Activated CD4-positive, alpha-beta memory T cell treated with anti-CD3 and anti-CD28 coated beads for 36 hours (primary cell): ENCODE measurements at regions of chr3 and their contacts with region 1.

Region 1: GRCh38 chr3:59424268-59425010 is 374.6 kb upstream of the CFAP20DC start:
- DNase-seq: peak; percentile 28
- H3K4me3 Mint-ChIP-seq: no peak overlapping the region
- H3K27ac Mint-ChIP-seq: no peak overlapping the region
- H3K4me1 Mint-ChIP-seq: peaks cover 69% of the 10 kb centered on the region
- H3K27me3 Mint-ChIP-seq: peaks cover 14% of the 10 kb centered on the region

Region 2: DNA sequence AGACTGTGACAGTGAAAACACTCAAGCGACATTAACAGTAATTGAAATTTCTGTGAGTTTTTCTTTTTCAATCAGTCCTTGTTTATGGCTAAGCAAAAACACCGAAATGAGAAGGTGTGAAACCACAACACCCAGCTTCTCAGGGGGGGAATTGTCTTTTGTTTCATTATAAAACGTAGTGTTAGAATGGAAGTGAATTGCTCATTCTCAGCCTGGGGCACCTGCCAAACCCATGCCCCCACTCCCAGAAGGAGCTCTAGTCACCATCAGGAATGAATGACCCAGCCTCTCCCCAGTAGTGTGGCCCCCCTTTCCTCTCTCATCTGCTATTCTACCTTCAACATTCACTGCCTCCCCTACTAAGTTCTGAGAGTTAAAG is 188.8 kb before region 1 on chr3:
- CTCF ChIA-PET with region 1: no interaction called
- POLR2A ChIA-PET with region 1: no interaction called
- intact Hi-C with region 1: loop called (anchors 2 kb)
- DNase-seq: peak; percentile 71
- H3K4me3 Mint-ChIP-seq: no peak overlapping the region
- H3K27ac Mint-ChIP-seq: no peak overlapping the region
- H3K4me1 Mint-ChIP-seq: peaks cover 19% of the 10 kb centered on the region
- H3K27me3 Mint-ChIP-seq: peaks cover 15% of the 10 kb centered on the region

Region 3: GRCh38 chr3:59313365-59313764 is 111.1 kb before region 1 on chr3:
- CTCF ChIA-PET with region 1: interaction called, 4 read pairs
- POLR2A ChIA-PET with region 1: no interaction called
- intact Hi-C with region 1: loop called (anchors 2 kb)
- DNase-seq: peak; percentile 68
- H3K4me3 Mint-ChIP-seq: no peak overlapping the region
- H3K27ac Mint-ChIP-seq: no peak overlapping the region
- H3K4me1 Mint-ChIP-seq: peaks cover 23% of the 10 kb centered on the region
- H3K27me3 Mint-ChIP-seq: no peaks in the 10 kb centered on the region

Region 4: GRCh38 chr3:59326246-59327024 is 98.0 kb before region 1 on chr3:
- CTCF ChIA-PET with region 1: no interaction called
- POLR2A ChIA-PET with region 1: no interaction called
- intact Hi-C with region 1: no loop called
- DNase-seq: no peak
- H3K4me3 Mint-ChIP-seq: no peak overlapping the region
- H3K27ac Mint-ChIP-seq: no peak overlapping the region
- H3K4me1 Mint-ChIP-seq: no peaks in the 10 kb centered on the region
- H3K27me3 Mint-ChIP-seq: no peaks in the 10 kb centered on the region

Region 5: DNA sequence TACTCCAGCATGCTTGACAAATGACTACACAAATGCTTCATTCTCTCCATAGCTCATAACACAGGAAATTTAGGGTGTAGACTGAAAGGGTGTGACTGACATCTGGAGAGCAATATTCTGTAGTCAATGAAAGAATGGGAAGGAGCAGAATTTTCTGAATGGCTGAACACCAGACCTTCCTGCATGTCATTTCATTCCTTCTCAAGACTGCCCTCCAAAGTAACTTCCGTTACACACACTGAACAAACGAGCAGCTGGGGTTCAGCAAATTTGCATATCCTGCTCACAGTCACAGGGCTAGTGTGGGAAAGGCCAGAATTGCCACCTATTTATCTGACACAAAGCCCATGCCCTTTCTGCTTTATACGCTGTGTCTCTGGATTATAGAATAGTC is 49.6 kb before region 1 on chr3:
- CTCF ChIA-PET with region 1: no interaction called
- POLR2A ChIA-PET with region 1: no interaction called
- intact Hi-C with region 1: no loop called
- DNase-seq: peak; percentile 28
- H3K4me3 Mint-ChIP-seq: no peak overlapping the region
- H3K27ac Mint-ChIP-seq: no peak overlapping the region
- H3K4me1 Mint-ChIP-seq: peaks cover 5% of the 10 kb centered on the region
- H3K27me3 Mint-ChIP-seq: peaks cover 2% of the 10 kb centered on the region

Region 6: DNA sequence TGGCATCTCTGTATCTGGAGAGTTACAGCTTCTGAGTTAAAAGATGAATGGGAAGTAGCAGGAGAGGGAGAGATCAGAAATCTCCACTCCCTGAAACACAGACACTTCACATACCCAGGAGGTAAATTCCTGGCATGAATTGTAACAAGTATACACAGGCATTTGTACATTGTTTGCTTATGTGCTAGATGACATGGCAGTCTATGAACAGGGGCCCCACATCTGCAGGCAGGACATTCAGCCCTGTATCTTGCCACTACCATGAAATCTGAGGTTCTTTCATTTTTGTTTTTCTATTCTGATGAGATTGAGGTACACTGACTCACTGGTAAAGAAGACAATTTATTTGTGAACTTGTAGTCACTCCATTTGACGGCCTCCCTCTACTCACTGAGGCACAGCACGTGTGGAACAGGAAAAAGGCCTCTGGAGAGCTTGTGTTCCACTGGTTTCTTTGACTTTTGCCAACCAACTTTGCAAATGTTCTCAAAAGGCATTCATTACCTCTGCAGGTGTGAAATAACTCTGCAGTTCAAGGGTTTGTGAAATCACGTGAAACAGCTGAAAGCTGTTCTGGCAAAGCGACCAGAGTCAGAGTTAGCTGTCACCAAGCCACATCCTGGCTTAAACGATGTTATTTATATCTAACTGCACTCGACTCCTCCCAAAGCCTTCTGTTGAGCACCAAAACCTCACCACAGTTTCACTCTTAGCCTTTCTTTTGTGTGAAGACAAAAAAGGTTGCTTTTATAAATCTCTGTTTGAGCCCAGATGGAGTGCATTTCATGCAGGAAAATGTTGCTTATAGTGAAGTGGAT is 26.7 kb after region 1 on chr3:
- CTCF ChIA-PET with region 1: interaction called, 10 read pairs
- POLR2A ChIA-PET with region 1: interaction called, 6 read pairs
- intact Hi-C with region 1: loop called (anchors 1 kb)
- DNase-seq: peak; percentile 73
- H3K4me3 Mint-ChIP-seq: peak overlapping the region; percentile 53
- H3K27ac Mint-ChIP-seq: peak overlapping the region; percentile 94
- H3K4me1 Mint-ChIP-seq: peaks cover 64% of the 10 kb centered on the region
- H3K27me3 Mint-ChIP-seq: no peaks in the 10 kb centered on the region

Region 7: DNA sequence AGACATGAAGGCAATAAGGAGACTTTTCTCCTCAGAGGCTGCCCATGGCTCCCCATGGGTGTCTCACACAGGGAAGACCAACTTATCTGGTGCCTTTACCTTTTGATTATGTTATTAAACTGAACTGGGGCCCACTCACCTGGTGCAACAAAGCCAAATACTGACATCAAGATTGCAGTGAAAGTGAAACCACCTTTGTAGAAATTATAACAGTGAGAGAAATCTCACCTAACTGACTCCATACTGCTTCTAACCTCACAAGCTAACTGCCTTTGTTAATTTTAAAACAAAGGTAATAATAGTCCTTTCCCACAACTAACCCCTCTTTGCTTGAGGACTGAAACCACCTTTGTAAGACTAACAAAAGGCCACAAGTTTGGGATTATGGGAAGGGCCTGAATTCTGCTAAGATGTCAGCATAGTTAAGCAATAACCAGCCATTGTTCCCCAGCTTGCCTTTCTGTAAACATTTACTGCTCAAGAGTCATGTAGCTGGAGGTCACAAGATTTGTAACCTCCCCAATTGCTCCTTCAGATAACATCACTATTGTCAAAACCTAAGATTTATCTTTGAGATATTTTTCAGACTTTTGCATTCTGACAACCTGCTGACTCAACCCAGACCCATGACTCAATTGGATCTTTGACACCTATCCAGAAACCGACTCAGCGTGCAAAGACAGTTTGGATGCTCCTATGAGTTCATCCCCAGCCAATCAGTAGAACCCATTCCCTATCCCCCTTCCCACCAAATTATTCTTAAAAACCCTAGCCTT is 45.7 kb after region 1 on chr3:
- CTCF ChIA-PET with region 1: no interaction called
- POLR2A ChIA-PET with region 1: no interaction called
- intact Hi-C with region 1: loop called (anchors 1 kb)
- DNase-seq: peak; percentile 70
- H3K4me3 Mint-ChIP-seq: no peak overlapping the region
- H3K27ac Mint-ChIP-seq: peak overlapping the region; percentile 71
- H3K4me1 Mint-ChIP-seq: peaks cover 22% of the 10 kb centered on the region
- H3K27me3 Mint-ChIP-seq: no peaks in the 10 kb centered on the region

Region 8: GRCh38 chr3:59526999-59527398 is 102.6 kb after region 1 on chr3:
- CTCF ChIA-PET with region 1: no interaction called
- POLR2A ChIA-PET with region 1: interaction called, 4 read pairs
- intact Hi-C with region 1: loop called (anchors 1 kb)
- DNase-seq: no peak
- H3K4me3 Mint-ChIP-seq: no peak overlapping the region
- H3K27ac Mint-ChIP-seq: peak overlapping the region; percentile 0
- H3K4me1 Mint-ChIP-seq: peaks cover 15% of the 10 kb centered on the region
- H3K27me3 Mint-ChIP-seq: peaks cover 2% of the 10 kb centered on the region

Region 9: GRCh38 chr3:59566481-59566975 is 142.1 kb after region 1 on chr3:
- CTCF ChIA-PET with region 1: interaction called, 3 read pairs
- POLR2A ChIA-PET with region 1: interaction called, 3 read pairs
- intact Hi-C with region 1: loop called (anchors 1 kb)
- DNase-seq: peak; percentile 66
- H3K4me3 Mint-ChIP-seq: no peak overlapping the region
- H3K27ac Mint-ChIP-seq: peak overlapping the region; percentile 18
- H3K4me1 Mint-ChIP-seq: peaks cover 17% of the 10 kb centered on the region
- H3K27me3 Mint-ChIP-seq: peaks cover 9% of the 10 kb centered on the region